Activated naive CD4-positive, alpha-beta T cell treated with anti-CD3 and anti-CD28 coated beads for 36 hours (primary cell): ENCODE measurements at regions of chr6 and their contacts with region 1.

Region 1: DNA sequence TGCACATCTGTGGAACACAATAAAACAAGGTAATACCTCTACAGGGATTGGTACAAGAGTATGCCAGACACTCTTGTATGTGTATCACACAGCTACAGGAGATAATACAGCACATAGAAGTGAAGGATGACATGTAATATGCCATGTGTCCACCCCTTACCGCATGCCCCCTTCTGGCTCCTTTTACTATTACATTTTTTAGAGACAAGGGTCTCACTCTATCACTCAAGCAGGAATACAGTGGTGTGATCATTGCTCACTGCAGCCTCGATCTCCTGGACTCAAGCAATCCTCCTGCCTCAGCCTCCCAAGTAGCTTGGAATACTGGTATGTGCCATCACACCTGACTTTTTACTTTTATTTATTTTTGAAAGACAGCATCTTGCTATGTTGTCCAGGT is 4.2 kb upstream of the NCR3 start:
- DNase-seq: peak; percentile 56
- H3K4me3 Mint-ChIP-seq: no peak overlapping the region
- H3K27ac Mint-ChIP-seq: peak overlapping the region; percentile 77
- H3K4me1 Mint-ChIP-seq: peaks cover 43% of the 10 kb centered on the region
- H3K27me3 Mint-ChIP-seq: no peaks in the 10 kb centered on the region

Region 2: GRCh38 chr6:31403283-31403989 is 193.6 kb before region 1 on chr6 and contains the start of gene MICA:
- CTCF ChIA-PET with region 1: interaction called, 5 read pairs
- intact Hi-C with region 1: loop called (anchors 1 kb)
- DNase-seq: peak; percentile 77
- H3K4me3 Mint-ChIP-seq: peak within 1 kb of the TSS; percentile 92
- H3K27ac Mint-ChIP-seq: peak within 1 kb of the TSS; percentile 17
- H3K4me1 Mint-ChIP-seq: peaks cover 62% of the 10 kb centered on the region
- H3K27me3 Mint-ChIP-seq: no peaks in the 10 kb centered on the region
- total RNA-seq, gene MICA: 10.2 to 10.4 TPM

Region 3: GRCh38 chr6:31559958-31560696 is 36.9 kb before region 1 on chr6:
- CTCF ChIA-PET with region 1: interaction called, 57 read pairs
- intact Hi-C with region 1: no loop called
- DNase-seq: peak; percentile 85
- H3K4me3 Mint-ChIP-seq: peak overlapping the region; percentile 60
- H3K27ac Mint-ChIP-seq: peak overlapping the region; percentile 92
- H3K4me1 Mint-ChIP-seq: peaks cover 80% of the 10 kb centered on the region
- H3K27me3 Mint-ChIP-seq: no peaks in the 10 kb centered on the region

Region 4: DNA sequence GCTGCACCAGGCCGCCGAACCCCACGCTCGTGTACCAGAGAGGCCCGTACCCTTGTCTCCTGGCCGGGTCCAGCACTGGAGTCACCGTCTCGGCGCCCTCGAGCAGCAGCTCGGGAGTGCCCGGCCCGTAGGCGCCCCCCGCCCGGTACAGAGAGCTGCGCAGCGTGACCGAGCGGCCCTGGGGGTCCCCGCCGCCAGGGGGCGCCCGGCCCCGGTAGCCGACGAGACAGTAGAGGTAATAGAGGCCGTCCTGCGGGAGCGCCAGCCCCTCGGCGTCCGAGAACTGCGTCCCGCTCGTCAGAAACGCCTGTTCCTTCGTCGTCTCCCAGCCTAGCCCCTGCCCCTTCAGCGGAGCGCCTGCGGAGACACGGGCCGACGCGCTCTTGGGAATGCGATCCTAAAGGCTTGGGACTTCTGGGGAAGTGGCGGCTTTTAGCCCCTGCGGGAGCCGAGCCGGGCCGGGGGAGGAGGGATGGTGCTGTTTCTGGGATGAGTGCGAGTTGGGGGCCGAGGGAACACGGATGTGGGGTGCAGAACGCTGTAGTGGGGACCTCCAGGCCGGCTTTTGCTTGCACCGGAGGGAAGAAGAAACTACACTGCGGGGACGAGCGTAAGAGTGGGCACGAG is 16.1 kb before region 1 on chr6:
- CTCF ChIA-PET with region 1: interaction called, 618 read pairs
- intact Hi-C with region 1: loop called (anchors 1 kb)
- DNase-seq: peak; percentile 90
- H3K4me3 Mint-ChIP-seq: peak overlapping the region; percentile 99
- H3K27ac Mint-ChIP-seq: peak overlapping the region; percentile 99
- H3K4me1 Mint-ChIP-seq: peaks cover 50% of the 10 kb centered on the region
- H3K27me3 Mint-ChIP-seq: no peaks in the 10 kb centered on the region

Region 5: DNA sequence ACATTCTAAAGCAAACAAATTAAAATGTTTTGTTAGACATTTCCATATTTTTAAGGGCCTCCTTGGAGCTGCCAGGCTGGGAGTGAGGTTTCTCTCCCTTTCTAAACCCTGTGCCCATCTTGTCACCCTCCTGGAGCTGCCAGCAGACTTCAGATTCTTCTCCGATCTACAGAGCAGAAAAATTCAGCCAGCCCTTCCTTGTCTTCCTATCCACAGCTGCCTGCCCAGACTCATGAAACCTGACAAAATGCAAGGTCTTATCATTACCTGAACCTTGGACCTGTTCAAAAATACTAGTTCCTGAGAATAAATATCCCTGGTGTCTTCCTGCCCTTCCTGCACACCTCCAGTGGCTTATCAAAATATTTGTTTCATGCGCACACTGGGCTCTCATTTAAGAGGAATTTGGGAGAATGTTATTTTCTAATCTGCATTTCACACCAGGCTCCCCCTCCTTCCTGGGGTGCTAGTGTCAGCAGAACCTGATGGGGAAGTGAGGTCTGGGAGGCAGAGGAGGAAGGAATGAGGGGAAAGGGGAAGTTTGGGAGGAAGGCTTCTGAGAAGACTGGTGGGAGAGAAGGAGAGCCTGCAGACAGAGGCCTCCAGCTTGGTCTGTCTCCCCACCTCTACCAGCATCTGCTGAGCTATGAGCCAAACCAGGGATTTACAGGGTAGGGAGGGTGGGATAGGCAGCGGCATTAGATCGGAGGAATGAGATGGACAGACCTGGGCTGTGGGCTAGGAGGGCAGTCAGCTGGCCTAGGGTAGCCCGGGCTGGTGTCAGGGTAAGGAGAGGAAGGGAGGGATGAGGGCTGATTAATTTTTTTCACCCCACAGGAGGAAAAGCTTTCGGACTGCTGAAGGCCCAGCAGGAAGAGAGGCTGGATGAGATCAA is 17.9 kb after region 1 on chr6 and contains the start of gene AIF1:
- CTCF ChIA-PET with region 1: interaction called, 41 read pairs
- intact Hi-C with region 1: no loop called
- DNase-seq: no peak
- H3K4me3 Mint-ChIP-seq: peak within 1 kb of the TSS; percentile 77
- H3K27ac Mint-ChIP-seq: peak within 1 kb of the TSS; percentile 91
- H3K4me1 Mint-ChIP-seq: peaks cover 43% of the 10 kb centered on the region
- H3K27me3 Mint-ChIP-seq: no peaks in the 10 kb centered on the region
- total RNA-seq, gene AIF1: 120 to 129 TPM